Mammary epithelial cell (primary cell): ENCODE measurements at regions of chr1 and their contacts with region 1.

Region 1: DNA sequence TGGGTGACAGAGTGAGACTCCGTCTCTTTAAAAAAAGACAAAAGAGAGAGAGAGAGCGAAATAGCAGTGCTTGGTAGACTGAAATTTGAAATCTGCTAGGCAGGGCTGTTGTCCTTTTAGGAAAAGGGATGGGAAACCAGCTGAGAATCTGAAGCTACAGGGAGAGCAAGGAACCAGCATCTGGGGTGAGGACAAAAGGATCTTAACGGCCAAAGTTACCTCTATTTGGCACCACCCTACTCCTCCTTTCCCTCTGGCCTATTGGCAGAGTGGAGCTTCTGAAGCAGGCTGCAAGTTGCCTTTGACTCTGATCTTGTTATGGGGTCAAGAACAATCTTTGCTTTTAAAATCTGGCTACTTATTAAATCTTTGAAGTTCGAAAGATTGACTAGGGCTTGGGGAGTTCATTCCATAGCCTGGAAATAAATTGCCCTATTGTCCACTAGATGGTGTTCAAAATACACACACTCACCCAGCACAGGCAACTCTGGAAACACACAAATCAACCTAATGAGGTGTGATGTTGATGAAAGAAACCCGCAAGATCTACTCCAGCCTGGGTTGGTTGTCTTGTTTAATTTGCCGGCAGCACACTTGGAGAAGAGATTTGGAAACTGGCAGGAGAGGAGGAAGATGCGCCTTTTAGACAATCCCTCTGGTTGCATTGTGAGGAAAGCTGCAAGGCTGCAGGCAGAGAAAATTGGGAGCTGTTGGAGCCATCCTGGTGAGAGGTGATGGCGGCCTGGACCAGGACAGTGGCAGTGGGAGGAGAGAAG is 16.5 kb upstream of the PARP1 start:
- DNase-seq: peak; percentile 39
- H3K4me3 ChIP-seq: no peak overlapping the region
- H3K27ac ChIP-seq: no peak overlapping the region
- H3K4me1 ChIP-seq: no peaks in the 10 kb centered on the region
- H3K27me3 ChIP-seq: no peaks in the 10 kb centered on the region
- CTCF ChIP-seq: peak; percentile 42 to 67

Region 2: DNA sequence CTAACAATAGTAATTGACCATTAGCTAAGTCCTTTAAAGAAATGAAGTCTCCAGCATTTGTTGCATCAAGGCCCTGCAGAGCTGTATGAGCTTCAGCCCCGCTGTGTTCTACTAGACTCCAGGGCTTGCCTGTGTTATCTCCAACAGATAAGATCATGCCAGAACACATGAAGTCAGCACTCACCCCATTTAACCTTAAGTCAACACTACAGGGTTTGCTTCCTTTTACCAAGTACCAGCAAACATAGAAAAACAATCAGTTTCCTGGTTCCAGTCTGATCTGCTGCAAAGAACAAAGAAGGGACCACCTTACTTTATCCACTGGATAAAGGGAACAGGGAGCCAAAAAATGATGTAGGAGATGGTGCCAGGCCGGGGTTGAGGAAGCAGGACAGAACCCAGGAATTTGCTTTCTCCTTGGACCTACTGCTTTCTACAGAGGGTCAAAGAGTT is 730.2 kb before region 1 on chr1:
- CTCF ChIA-PET with region 1: no interaction called
- dilution Hi-C with region 1: no loop called
- in situ Hi-C with region 1: no loop called
- intact Hi-C with region 1: no loop called
- DNase-seq: no peak
- H3K4me3 ChIP-seq: no peak overlapping the region
- H3K27ac ChIP-seq: no peak overlapping the region
- H3K4me1 ChIP-seq: peaks cover under 1% of the 10 kb centered on the region
- H3K27me3 ChIP-seq: no peaks in the 10 kb centered on the region
- CTCF ChIP-seq: no peak

Region 3: DNA sequence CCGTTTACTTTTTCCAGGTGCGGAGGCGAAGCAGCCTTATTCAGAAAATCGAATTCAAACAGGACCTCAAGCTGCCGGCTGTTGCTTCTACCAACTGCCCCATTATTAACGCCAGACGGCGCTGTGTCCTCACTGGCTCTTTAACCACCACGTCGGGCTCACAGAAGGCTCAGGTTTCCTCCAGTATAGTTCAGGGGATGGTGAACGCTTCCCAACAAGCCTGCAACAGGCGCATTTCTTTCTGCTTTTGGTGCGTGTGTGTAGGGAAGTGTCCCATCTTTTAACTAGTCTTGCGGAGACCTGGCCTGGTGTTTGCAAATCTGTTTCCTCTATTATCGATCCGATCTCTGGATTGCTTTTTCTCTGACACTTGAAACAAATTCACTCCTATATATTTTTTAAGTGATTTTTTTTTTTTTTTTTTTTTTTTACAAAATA is 123.4 kb after region 1 on chr1:
- CTCF ChIA-PET with region 1: interaction called, 14 read pairs
- dilution Hi-C with region 1: no loop called
- in situ Hi-C with region 1: no loop called
- intact Hi-C with region 1: loop called (anchors 2 kb)
- DNase-seq: peak; percentile 81
- H3K4me3 ChIP-seq: no peak overlapping the region
- H3K27ac ChIP-seq: no peak overlapping the region
- H3K4me1 ChIP-seq: peaks cover 21% of the 10 kb centered on the region
- H3K27me3 ChIP-seq: peaks cover 12% of the 10 kb centered on the region
- CTCF ChIP-seq: peak; percentile 98 to 99

Region 4: GRCh38 chr1:226634166-226634588 is 209.8 kb after region 1 on chr1:
- CTCF ChIA-PET with region 1: no interaction called
- dilution Hi-C with region 1: no loop called
- in situ Hi-C with region 1: no loop called
- intact Hi-C with region 1: loop called (anchors 1 kb)
- DNase-seq: peak; percentile 32
- H3K4me3 ChIP-seq: no peak overlapping the region
- H3K27ac ChIP-seq: no peak overlapping the region
- H3K4me1 ChIP-seq: peaks cover 7% of the 10 kb centered on the region
- H3K27me3 ChIP-seq: no peaks in the 10 kb centered on the region
- CTCF ChIP-seq: peak; percentile 73 to 96